AG04450 (cell line): ENCODE measurements at regions of chr9 and their contacts with region 1.

Region 1: GRCh38 chr9:81521892-81522291 is 167.5 kb downstream of the TLE1 start:
- DNase-seq: no peak
- H3K4me3 ChIP-seq: no peak overlapping the region
- H3K27ac ChIP-seq: no peak overlapping the region
- H3K27me3 ChIP-seq: no peaks in the 10 kb centered on the region
- CTCF ChIP-seq: no peak

Region 2: GRCh38 chr9:81499021-81499454 is 22.9 kb before region 1 on chr9:
- CTCF ChIA-PET with region 1: interaction called, 15 read pairs
- POLR2A ChIA-PET with region 1: interaction called, 4 read pairs
- DNase-seq: peak; percentile 54
- H3K4me3 ChIP-seq: no peak overlapping the region
- H3K27ac ChIP-seq: peak overlapping the region; percentile 33
- H3K27me3 ChIP-seq: no peaks in the 10 kb centered on the region
- CTCF ChIP-seq: no peak

Region 3: DNA sequence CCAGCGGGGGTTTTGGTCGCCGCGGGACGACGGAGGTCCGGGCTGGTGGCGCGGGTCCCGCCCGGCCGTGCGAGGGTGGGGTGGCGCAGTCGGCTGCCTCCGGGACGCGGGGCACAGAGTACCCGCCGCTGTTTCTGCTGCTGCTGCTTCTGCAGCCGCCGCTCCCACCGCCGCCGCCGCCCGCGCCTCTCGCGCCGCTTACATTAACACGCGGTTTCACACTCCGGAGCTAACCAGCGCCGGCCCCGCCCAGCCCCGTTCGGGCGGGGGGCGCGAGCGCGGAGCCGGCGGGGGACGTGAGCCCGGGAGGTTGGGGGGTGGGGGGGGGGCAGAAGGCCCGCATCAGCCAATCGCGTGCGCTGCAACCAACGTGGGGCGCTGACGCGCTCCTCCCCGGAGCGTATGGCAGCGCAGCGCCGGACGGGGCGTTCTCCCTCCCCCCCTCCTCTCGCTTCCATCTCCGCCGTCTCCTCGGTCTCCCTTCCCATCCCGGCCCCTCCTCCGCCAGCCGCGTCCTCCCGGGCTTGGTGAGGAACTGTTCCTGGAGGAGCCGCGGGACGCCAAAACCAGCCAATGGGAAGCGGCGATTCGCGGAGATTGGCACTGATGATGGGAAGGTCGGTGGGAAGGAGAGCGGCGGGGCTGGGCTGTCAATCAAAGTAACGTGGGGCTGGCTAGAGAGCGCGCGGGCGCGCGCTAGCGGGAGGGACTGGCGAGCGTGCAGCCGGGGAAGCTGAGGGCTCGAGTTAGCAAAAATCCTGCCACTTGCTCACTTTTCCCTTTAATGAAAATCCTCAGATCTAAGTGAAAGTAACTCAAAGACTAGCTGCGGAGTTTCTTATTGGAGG is 167.7 kb after region 1 on chr9 and contains the start of gene TLE1:
- CTCF ChIA-PET with region 1: interaction called, 15 read pairs
- POLR2A ChIA-PET with region 1: no interaction called
- DNase-seq: peak; percentile 100
- H3K4me3 ChIP-seq: peak within 1 kb of the TSS; percentile 86
- H3K27ac ChIP-seq: peak within 1 kb of the TSS; percentile 71
- H3K27me3 ChIP-seq: no peaks in the 10 kb centered on the region
- CTCF ChIP-seq: 0 out of 2 replicates have a peak, but pooled peaks have one; percentile 7
- polyA plus RNA-seq, gene TLE1: 42.8 and 44.0 TPM in 2 replicates

Region 4: DNA sequence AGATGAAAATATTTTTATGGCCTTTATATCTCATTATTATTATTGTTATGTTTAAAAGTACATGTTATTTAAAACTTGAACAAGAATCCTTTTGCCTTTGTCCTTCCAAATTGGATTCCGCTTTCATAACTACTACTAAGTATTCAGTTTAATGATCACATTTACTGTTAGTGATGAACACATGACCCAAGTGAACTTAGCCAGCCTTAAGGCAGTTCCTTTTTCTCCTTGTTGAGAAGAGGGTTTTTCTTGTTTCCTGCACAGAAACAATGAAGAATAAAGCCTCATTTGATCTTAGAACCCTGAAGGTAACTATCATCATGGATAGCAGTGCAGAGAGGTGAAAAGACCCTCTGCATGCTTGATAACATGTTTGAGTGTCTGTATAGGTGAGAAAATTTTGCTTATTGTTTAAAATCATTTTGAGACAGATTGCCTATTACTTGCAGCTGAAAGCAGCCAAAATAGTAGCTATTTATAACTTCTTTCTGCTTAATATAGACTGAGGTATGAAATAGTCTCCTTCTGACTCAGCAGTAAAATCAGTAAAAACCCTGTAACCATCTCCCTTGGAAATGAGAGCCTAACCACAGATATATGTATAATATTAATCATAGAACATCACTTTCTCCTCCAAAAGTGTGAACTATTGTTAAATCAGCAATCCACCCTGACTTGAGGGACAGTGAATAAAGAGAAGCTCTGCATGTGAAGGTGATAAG is 732.9 kb after region 1 on chr9:
- CTCF ChIA-PET with region 1: no interaction called
- POLR2A ChIA-PET with region 1: no interaction called
- DNase-seq: no peak
- H3K4me3 ChIP-seq: no peak overlapping the region
- H3K27ac ChIP-seq: no peak overlapping the region
- H3K27me3 ChIP-seq: no peaks in the 10 kb centered on the region
- CTCF ChIP-seq: no peak